ENCODE measurements at regions of chr4 and their contacts with region 1.

Region 1: GRCh38 chr4:2536193-2537010 is at the start of gene FAM193A:
- DNase-seq: peak; percentile 82
- ATAC-seq: peak; percentile 93
- H3K4me3 ChIP-seq: peak within 1 kb of the TSS; percentile 73 to 74
- H3K27ac ChIP-seq: peak within 1 kb of the TSS; percentile 84
- H3K4me1 ChIP-seq: peaks cover 5% of the 10 kb centered on the region; the same call in 1 of the 2 replicates
- H3K27me3 ChIP-seq: no peaks in the 10 kb centered on the region
- CTCF ChIP-seq: no peak
- total RNA-seq, gene FAM193A: 25.7 TPM

Region 2: GRCh38 chr4:2591189-2591588 is 54.8 kb after region 1 on chr4:
- CTCF ChIA-PET with region 1: no interaction called
- POLR2A ChIA-PET with region 1: no interaction called
- in situ Hi-C with region 1: no loop called
- intact Hi-C with region 1: no loop called
- DNase-seq: no peak
- ATAC-seq: no peak
- H3K4me3 ChIP-seq: no peak overlapping the region
- H3K27ac ChIP-seq: no peak overlapping the region
- H3K4me1 ChIP-seq: peaks cover 6% of the 10 kb centered on the region
- H3K27me3 ChIP-seq: no peaks in the 10 kb centered on the region
- CTCF ChIP-seq: no peak

Region 3: DNA sequence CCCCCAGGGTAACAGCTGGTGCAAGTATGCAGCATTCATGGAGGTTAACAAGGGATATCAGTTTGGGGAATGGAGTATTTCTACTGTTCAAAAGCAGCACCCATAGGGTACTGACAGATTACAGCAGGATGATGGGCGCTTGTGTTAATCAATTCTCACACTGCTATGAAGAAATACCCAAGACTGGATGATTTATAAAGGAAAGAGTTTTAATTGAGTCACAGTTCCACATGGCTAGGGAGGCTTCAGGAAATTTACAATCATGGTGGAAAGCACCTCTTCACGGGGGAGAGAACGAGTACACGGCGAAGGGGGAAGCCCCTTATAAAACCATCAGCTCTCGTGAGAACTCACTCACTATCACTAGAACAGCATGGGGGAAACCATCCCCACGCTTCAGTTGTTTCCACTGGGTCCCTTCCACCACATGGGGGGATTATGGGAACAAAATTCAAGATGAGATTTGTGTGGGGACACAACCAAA is 155.6 kb after region 1 on chr4:
- CTCF ChIA-PET with region 1: no interaction called
- POLR2A ChIA-PET with region 1: interaction called, 17 read pairs
- in situ Hi-C with region 1: no loop called
- intact Hi-C with region 1: no loop called
- DNase-seq: no peak
- ATAC-seq: no peak
- H3K4me3 ChIP-seq: no peak overlapping the region
- H3K27ac ChIP-seq: no peak overlapping the region
- H3K4me1 ChIP-seq: no peaks in the 10 kb centered on the region
- H3K27me3 ChIP-seq: no peaks in the 10 kb centered on the region
- CTCF ChIP-seq: no peak